IMR-90 (cell line): ENCODE measurements at regions of chr19 and their contacts with region 1.

Region 1: GRCh38 chr19:40716655-40717324 is at the starts of genes COQ8B and ITPKC:
- DNase-seq: peak; percentile 96
- ATAC-seq: peak; percentile 75
- H3K4me3 ChIP-seq: peak within 1 kb of the TSS; percentile 86
- H3K27ac ChIP-seq: peak within 1 kb of the TSS; percentile 96
- H3K4me1 ChIP-seq: peaks cover 9% of the 10 kb centered on the region
- H3K27me3 ChIP-seq: no peaks in the 10 kb centered on the region
- CTCF ChIP-seq: 0 out of 2 replicates have a peak, but pooled peaks have one; percentile 8
- POLR2A ChIP-seq: peak; percentile 83
- RAD21 ChIP-seq: no peak
- total RNA-seq, gene COQ8B: 14.2 and 14.9 TPM in 2 replicates
- total RNA-seq, gene ITPKC: 7.7 and 8.6 TPM in 2 replicates

Region 2: GRCh38 chr19:40690693-40691420 is 25.9 kb before region 1 on chr19:
- CTCF ChIA-PET with region 1: no interaction called
- POLR2A ChIA-PET with region 1: no interaction called
- dilution Hi-C with region 1: no loop called
- in situ Hi-C with region 1: no loop called
- intact Hi-C with region 1: loop called (anchors 2 kb)
- DNase-seq: peak; percentile 86
- ATAC-seq: peak; percentile 87
- H3K4me3 ChIP-seq: peak overlapping the region; percentile 47
- H3K27ac ChIP-seq: peak overlapping the region; percentile 90
- H3K4me1 ChIP-seq: peaks cover 17% of the 10 kb centered on the region
- H3K27me3 ChIP-seq: no peaks in the 10 kb centered on the region
- CTCF ChIP-seq: no peak
- POLR2A ChIP-seq: no peak; the same call in 1 of the 2 replicates
- RAD21 ChIP-seq: no peak

Region 3: GRCh38 chr19:40798223-40798996 is 81.6 kb after region 1 on chr19:
- CTCF ChIA-PET with region 1: no interaction called
- POLR2A ChIA-PET with region 1: no interaction called
- dilution Hi-C with region 1: no loop called
- in situ Hi-C with region 1: no loop called
- intact Hi-C with region 1: loop called (anchors 5 kb)
- DNase-seq: peak; percentile 99
- ATAC-seq: peak; percentile 13
- H3K4me3 ChIP-seq: peak overlapping the region; percentile 55
- H3K27ac ChIP-seq: peak overlapping the region; percentile 47
- H3K4me1 ChIP-seq: peaks cover 28% of the 10 kb centered on the region
- H3K27me3 ChIP-seq: no peaks in the 10 kb centered on the region
- CTCF ChIP-seq: peak; percentile 47
- POLR2A ChIP-seq: no peak
- RAD21 ChIP-seq: no peak; the same call in 1 of the 2 replicates

Region 4: GRCh38 chr19:40811478-40812341 is 94.9 kb after region 1 on chr19:
- CTCF ChIA-PET with region 1: no interaction called
- POLR2A ChIA-PET with region 1: no interaction called
- dilution Hi-C with region 1: no loop called
- in situ Hi-C with region 1: no loop called
- intact Hi-C with region 1: no loop called
- DNase-seq: no peak
- ATAC-seq: no peak
- H3K4me3 ChIP-seq: no peak overlapping the region; the same call in 1 of the 2 replicates
- H3K27ac ChIP-seq: peak overlapping the region; percentile 35; the same call in 1 of the 2 replicates
- H3K4me1 ChIP-seq: peaks cover 8% of the 10 kb centered on the region
- H3K27me3 ChIP-seq: no peaks in the 10 kb centered on the region
- CTCF ChIP-seq: no peak
- POLR2A ChIP-seq: no peak
- RAD21 ChIP-seq: no peak